Heart right ventricle (tissue), 16 donors: ENCODE measurements at regions of chr14 and their contacts with region 1.

Region 1: DNA sequence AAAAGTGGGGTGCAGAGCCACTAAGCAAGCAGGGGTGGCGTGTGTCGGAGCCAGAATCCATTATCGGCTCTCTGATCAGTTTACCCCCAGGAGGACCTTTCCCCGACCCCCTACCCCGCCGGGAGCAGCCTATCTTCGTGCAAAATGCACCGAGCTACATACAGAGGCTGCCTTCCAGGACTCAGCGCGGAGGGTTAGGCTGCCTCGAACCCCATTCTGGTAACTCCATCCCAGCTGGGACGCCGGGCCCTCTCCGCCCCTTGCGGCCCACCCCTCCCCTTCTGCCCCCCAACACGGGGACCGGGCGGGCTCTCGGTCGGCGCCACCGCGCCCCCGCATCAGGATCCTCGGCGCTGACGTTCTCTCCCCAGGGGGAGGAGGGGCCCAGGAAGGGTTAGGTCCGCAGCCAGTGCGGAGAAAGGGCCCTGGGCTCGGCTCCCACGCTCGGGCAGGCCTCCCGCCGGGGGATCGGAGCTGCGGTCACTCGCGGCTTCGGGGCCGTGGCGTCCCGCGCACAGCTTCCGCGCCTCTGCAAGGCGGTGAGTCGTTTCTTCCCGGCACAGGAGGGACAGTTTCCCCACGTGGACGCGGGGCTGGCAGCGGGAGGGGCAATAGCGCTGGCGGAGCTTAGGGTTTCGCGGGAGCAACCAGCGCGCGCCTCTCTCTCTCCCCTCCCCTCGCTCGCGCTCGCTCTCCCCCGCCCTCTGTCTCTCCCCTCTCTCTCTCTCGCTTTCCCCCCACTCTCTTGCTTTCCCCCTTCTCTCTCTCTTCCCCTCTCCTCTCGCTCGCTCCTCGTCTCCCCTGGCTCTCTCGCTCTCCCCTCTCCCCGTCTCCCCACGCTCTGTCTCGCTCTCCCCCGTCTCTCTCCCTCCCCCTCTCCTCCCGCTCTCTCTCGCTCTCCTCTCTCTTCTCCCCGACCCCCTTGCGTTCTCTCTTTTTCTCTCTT is 12.5 kb upstream of the MAP3K9 start:
- DNase-seq: peak; percentile 46 to 53
- ATAC-seq: peak; percentile 42 to 76 (median 60)
- H3K4me3 ChIP-seq: peak overlapping the region; percentile 40 to 80 (median 72)
- H3K27ac ChIP-seq: peak overlapping the region in 9 of 10 donors; percentile 23 to 79 (median 65)
- H3K4me1 ChIP-seq: peaks cover 6 to 29% (median 17%) of the 10 kb centered on the region in 9 donors
- H3K27me3 ChIP-seq: peaks cover 0 to 35% (median 6%) of the 10 kb centered on the region in 7 donors
- CTCF ChIP-seq: no peak

Region 2: GRCh38 chr14:70759398-70759797 is 62.5 kb before region 1 on chr14:
- intact Hi-C with region 1: no loop called
- DNase-seq: no peak
- ATAC-seq: no peak
- H3K4me3 ChIP-seq: no peak overlapping the region
- H3K27ac ChIP-seq: no peak overlapping the region
- H3K4me1 ChIP-seq: peaks cover 0 to 7% (median 0%) of the 10 kb centered on the region in 9 donors
- H3K27me3 ChIP-seq: no peaks in the 10 kb centered on the region
- CTCF ChIP-seq: no peak

Region 3: DNA sequence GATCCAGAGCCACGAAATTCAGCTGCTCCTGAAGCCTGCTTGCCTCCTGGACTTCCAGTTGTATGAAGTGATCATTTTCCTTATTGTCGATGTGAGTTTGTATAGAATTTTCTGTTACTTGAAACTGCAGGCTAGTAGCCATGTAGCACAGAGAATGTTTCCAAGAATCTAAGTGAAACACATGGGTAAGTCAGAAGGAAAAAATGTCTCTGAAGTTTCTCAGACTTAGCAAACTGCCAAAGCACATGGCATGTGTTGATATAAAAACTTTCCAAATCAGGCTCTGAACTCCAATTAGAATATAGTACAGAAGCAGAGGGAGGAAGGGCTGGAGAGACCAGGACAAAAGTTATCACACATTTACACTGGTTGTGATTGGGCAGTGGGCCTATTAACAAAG is 75.6 kb after region 1 on chr14:
- intact Hi-C with region 1: loop called in 3 of 10 experiments (anchors 5 to 10 kb)
- DNase-seq: no peak
- ATAC-seq: peak in 3 of 8 donors; percentile 10 to 39 (median 35)
- H3K4me3 ChIP-seq: no peak overlapping the region
- H3K27ac ChIP-seq: no peak overlapping the region
- H3K4me1 ChIP-seq: peaks cover 0 to 27% (median 5%) of the 10 kb centered on the region in 9 donors
- H3K27me3 ChIP-seq: no peaks in the 10 kb centered on the region
- CTCF ChIP-seq: no peak

Region 4: GRCh38 chr14:70934502-70935134 is 112.8 kb after region 1 on chr14:
- intact Hi-C with region 1: no loop called
- DNase-seq: no peak
- ATAC-seq: peak in 6 of 8 donors; percentile 37 to 73 (median 42)
- H3K4me3 ChIP-seq: no peak overlapping the region
- H3K27ac ChIP-seq: peak overlapping the region in 2 of 10 donors; percentile 9 to 70
- H3K4me1 ChIP-seq: peaks cover 3 to 55% (median 42%) of the 10 kb centered on the region in 9 donors
- H3K27me3 ChIP-seq: no peaks in the 10 kb centered on the region
- CTCF ChIP-seq: no peak

Region 5: DNA sequence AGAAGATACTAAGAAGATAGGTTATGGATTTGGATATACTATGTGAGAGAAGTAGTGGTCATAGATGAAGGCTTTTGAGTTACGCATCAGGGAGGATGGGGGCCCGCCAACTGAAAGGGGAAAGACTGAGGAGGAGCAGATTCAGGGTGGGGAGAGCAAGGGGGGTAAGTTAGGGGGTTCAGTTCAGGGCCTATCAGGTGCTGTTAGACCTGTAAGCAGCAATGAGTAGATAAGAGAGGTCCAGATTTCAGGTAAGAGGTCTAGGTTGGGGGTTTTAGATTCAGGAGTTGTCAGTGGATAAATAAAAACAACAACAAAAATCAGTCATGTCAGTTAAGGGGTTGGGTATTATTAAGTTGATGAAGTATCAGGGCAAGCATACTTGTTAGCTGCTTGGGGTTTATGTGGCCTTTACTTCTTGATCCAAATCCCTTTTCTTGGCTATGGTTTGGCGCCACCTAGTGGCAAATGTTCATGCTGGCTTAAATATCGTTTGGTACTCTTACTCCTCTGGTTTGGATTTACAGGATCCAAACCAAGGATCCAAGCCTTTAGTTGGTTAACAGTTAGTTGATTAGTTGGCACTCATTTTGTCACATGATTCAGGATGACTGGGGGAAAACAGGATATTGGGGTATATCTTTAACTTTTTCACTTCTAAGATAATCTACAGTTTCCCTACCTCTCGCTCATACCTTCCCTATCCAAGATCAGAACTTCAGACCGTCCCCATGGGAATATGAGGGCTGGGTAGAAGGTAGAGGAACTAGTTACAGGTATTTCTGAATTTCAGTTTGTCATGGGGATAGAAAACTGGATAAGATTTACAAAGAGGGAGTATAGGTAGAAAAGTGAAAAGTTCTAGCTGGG is 150.5 kb after region 1 on chr14:
- intact Hi-C with region 1: loop called (anchors 1 to 5 kb)
- DNase-seq: peak; percentile 55 to 86
- ATAC-seq: peak; percentile 71 to 94 (median 88)
- H3K4me3 ChIP-seq: no peak overlapping the region
- H3K27ac ChIP-seq: peak overlapping the region in 1 of 10 donors; percentile 42
- H3K4me1 ChIP-seq: peaks cover 0 to 25% (median 10%) of the 10 kb centered on the region in 9 donors
- H3K27me3 ChIP-seq: no peaks in the 10 kb centered on the region
- CTCF ChIP-seq: peak; percentile 87 to 97 (median 94)

Region 6: DNA sequence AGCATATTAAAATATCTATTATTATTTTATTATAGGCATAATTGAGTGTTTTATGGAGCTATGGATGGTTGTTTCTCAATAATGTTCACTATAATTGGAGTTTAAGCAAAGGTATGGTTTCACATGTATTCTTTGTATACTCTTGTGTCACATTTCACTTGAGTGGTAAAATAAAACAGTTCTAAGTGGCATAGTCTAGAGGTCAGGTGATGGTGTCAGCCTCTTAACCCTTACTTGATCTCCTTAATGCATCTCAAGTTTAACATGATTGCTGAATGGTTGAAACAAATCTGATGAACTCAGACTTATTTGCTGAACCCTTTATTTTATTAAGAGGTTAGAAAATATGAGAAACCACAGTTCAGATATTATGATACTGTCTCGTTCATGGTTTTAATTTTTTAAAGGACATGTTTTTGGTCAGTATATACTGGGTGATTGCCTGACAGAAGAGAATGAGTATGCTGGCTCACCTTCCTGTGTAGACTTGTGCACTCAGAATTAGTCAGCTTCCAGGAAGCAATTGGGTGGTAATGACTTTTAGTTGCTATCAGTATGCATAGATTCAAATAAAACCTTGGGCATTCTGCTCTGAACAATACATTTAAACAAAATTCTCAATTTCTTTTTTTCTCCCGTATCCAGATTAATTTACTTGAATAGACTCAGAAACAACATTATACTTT is 550.0 kb after region 1 on chr14:
- intact Hi-C with region 1: no loop called
- DNase-seq: no peak
- ATAC-seq: peak in 1 of 8 donors; percentile 42
- H3K4me3 ChIP-seq: no peak overlapping the region
- H3K27ac ChIP-seq: peak overlapping the region in 1 of 10 donors; percentile 71
- H3K4me1 ChIP-seq: peaks cover 0 to 16% (median 0%) of the 10 kb centered on the region in 9 donors
- H3K27me3 ChIP-seq: no peaks in the 10 kb centered on the region
- CTCF ChIP-seq: no peak